Heart left ventricle (tissue), 16 donors: ENCODE measurements at regions of chr1 and their contacts with region 1.

Region 1: DNA sequence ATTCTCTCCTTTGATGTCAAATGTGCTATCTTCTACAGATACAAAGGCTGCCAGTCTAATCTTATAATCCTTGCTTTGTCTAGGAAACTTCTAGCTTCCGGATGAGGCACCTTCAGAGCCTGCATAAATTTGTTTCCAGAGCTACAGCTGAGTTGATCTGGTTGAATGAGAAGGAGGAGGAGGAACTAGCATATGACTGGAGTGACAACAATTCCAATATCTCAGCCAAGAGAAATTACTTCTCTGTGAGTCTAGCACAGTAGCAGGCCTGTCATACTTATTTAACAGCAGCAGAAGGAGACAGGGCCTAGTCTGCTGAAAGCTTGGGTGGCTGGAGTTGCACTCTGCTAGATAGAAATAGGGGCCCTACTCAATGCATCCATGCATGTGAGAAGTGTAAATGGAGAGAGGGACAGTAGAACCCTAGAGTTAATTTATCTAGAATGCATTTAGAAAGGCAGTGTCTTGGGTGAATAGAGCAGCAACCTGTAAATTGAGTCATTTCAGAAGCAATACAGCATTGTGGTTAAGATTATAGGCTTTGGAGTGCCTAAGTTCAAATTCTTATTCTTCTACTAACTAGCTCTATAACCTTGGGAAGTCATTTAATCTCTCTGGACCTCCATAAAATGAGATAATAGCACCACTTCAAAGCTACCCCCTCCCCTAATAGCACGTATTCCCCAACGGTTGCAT is 89.0 kb downstream of the MACF1 start:
- DNase-seq: no peak
- ATAC-seq: peak; percentile 32 to 73 (median 69)
- H3K4me3 ChIP-seq: no peak overlapping the region
- H3K27ac ChIP-seq: peak overlapping the region in 4 of 12 donors; percentile 16 to 36 (median 24)
- H3K4me1 ChIP-seq: peaks cover 0 to 25% (median 9%) of the 10 kb centered on the region in 12 donors
- H3K27me3 ChIP-seq: no peaks in the 10 kb centered on the region
- CTCF ChIP-seq: no peak
- POLR2A ChIP-seq: no peak

Region 2: GRCh38 chr1:39344394-39345154 is 51.1 kb after region 1 on chr1:
- intact Hi-C with region 1: loop called in 1 of 10 experiments (anchors 10 kb)
- DNase-seq: no peak
- ATAC-seq: no peak
- H3K4me3 ChIP-seq: no peak overlapping the region
- H3K27ac ChIP-seq: no peak overlapping the region
- H3K4me1 ChIP-seq: no peaks in the 10 kb centered on the region
- H3K27me3 ChIP-seq: no peaks in the 10 kb centered on the region
- CTCF ChIP-seq: no peak
- POLR2A ChIP-seq: no peak